ENCODE measurements at regions of chr15 and their contacts with region 1.

Region 1: DNA sequence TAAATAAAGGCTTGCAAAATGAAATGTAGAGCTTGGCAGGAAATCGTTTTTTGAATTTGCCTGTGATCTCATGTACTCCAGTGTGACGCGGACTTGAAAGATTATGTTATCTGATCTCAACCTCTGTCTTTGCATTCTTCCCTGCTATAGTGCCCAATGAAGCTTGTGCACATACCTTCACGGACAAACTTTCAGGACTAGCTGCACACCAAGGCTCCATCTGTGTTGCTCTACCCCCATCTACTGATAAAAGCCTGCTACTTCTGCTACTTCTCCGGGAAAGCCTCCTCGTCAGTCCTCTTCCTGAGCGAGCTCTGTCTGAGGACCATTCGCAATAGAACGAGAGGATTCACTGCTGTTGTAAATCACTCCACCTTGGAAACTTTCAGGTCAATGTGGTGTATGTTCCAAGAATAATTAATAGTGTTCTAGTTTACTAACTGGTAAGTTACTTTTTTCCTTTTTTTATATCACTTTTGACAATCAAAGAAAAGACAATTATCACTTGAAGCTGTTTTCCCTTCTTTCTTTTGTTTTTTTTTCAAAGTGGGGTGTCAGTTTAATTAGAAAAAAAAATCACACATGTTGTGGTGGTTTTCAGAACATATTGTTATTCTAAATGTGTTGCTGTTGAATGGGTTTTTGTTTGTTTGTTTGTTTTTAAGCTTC is 217.6 kb downstream of the ARRDC4 start:
- DNase-seq: peak; percentile 87
- H3K27ac ChIP-seq: no peak overlapping the region
- CTCF ChIP-seq: peak; percentile 96

Region 2: GRCh38 chr15:97903971-97904572 is 274.0 kb before region 1 on chr15:
- CTCF ChIA-PET with region 1: interaction called, 58 read pairs
- POLR2A ChIA-PET with region 1: no interaction called
- DNase-seq: peak; percentile 85
- H3K27ac ChIP-seq: no peak overlapping the region
- CTCF ChIP-seq: peak; percentile 86

Region 3: DNA sequence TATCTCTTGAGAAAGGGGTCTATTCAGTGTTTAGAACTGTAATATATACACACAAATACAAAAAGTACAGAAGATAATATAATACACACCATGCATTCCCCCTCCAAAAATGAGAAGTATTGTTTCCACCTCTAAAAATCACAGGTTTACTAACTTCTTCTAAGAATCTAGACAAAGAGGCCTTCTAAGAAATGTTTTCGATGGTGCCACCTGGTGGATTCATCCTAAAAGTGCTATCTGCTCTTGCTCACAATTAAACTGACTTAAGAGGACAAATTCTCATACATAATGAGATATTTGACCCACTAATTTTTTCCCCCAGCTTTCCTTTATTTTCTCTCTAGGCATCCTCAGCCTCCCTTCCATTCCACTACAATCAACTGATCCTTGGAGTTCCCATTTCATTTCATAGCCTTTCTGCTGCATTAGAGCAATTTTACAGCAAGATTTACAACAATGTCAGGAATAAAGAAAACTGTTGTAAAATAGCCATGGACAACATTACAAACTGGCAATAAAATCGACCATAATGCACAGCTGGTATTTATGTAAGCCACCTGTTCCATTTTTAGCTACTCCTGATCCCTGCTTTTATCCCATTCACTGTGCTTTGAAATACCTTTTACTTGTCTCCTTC is 92.9 kb before region 1 on chr15:
- CTCF ChIA-PET with region 1: interaction called, 10 read pairs
- POLR2A ChIA-PET with region 1: no interaction called
- DNase-seq: peak; percentile 59
- H3K27ac ChIP-seq: no peak overlapping the region
- CTCF ChIP-seq: peak; percentile 82

Region 4: GRCh38 chr15:98202256-98202655 is 24.2 kb after region 1 on chr15:
- CTCF ChIA-PET with region 1: interaction called, 11 read pairs
- POLR2A ChIA-PET with region 1: no interaction called
- DNase-seq: no peak
- H3K27ac ChIP-seq: no peak overlapping the region
- CTCF ChIP-seq: no peak

Measured in RWPE1 (cell line).